A673 (cell line): ENCODE measurements at regions of chr20 and their contacts with region 1.

Region 1: DNA sequence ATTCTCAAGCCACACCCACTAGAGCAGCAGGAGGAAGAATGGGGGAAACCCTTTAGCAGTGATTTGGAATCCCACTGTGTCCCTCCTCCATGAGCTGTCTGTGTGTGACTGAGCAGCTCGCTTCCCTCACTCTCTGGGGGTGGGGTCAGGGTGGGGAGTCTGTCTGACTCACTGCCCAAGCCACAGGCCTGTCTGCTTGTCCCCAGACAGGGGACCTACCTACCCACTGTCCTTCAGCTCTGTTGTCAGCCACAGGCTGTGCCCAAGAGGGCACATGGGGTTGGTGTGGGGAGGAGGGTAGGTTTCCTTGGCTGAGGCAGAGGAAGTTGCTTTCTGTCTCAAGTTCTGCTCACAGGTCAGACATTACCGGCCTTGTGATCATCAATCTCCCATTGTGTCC is 127.0 kb downstream of the MAFB start:
- DNase-seq: no peak
- H3K4me3 ChIP-seq: no peak overlapping the region
- H3K27ac ChIP-seq: no peak overlapping the region
- H3K4me1 ChIP-seq: no peaks in the 10 kb centered on the region
- H3K27me3 ChIP-seq: no peaks in the 10 kb centered on the region
- CTCF ChIP-seq: no peak

Region 2: GRCh38 chr20:39534846-39535245 is 1027.2 kb before region 1 on chr20:
- CTCF ChIA-PET with region 1: no interaction called
- POLR2A ChIA-PET with region 1: interaction called, 13 read pairs
- intact Hi-C with region 1: no loop called
- DNase-seq: no peak
- H3K4me3 ChIP-seq: no peak overlapping the region
- H3K27ac ChIP-seq: no peak overlapping the region
- H3K4me1 ChIP-seq: no peaks in the 10 kb centered on the region
- H3K27me3 ChIP-seq: no peaks in the 10 kb centered on the region
- CTCF ChIP-seq: no peak

Region 3: DNA sequence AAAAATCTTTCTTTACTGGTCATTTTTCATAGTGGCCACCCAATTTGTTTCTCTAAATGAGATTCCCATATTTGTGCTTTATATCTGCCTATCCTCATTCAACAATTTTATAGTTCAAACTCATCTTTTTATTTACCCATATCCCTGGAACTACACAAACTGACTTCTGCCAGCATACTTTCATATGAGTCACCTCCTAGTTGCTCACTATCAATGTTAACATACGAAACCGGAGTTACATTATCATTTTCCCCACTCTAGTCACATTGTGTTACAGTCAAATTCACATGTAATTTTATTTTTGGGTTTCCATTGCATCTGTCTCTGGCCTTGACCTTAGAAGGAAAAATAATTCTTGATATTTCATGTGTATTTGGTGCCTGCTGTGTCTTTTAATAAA is 372.4 kb before region 1 on chr20:
- CTCF ChIA-PET with region 1: no interaction called
- POLR2A ChIA-PET with region 1: no interaction called
- intact Hi-C with region 1: no loop called
- DNase-seq: no peak
- H3K4me3 ChIP-seq: no peak overlapping the region
- H3K27ac ChIP-seq: no peak overlapping the region
- H3K4me1 ChIP-seq: no peaks in the 10 kb centered on the region
- H3K27me3 ChIP-seq: no peaks in the 10 kb centered on the region
- CTCF ChIP-seq: no peak

Region 4: DNA sequence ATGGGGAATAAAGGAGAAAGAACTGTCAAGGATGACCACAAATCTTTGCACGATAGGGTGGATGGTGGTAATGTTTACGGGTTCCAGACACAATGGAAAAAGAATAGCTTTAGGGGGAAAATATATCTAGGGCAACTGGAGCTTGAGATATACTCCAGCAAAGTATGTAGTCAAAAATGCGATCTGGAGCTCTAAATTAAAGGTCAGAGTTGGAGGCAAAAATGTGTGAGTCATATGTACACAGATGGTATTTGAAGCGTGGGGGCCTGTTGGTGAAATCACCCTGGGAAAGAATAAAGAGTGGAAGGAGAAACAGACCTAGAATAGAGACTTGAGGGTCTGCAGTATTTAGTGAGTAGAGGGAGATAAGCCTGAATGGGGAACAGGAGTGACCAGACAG is 1690.1 kb after region 1 on chr20:
- CTCF ChIA-PET with region 1: no interaction called
- POLR2A ChIA-PET with region 1: no interaction called
- intact Hi-C with region 1: no loop called
- DNase-seq: no peak
- H3K4me3 ChIP-seq: no peak overlapping the region
- H3K27ac ChIP-seq: no peak overlapping the region
- H3K4me1 ChIP-seq: no peaks in the 10 kb centered on the region
- H3K27me3 ChIP-seq: peaks cover 6% of the 10 kb centered on the region
- CTCF ChIP-seq: no peak